ENCODE measurements at regions of chr3 and their contacts with region 1.

Region 1: DNA sequence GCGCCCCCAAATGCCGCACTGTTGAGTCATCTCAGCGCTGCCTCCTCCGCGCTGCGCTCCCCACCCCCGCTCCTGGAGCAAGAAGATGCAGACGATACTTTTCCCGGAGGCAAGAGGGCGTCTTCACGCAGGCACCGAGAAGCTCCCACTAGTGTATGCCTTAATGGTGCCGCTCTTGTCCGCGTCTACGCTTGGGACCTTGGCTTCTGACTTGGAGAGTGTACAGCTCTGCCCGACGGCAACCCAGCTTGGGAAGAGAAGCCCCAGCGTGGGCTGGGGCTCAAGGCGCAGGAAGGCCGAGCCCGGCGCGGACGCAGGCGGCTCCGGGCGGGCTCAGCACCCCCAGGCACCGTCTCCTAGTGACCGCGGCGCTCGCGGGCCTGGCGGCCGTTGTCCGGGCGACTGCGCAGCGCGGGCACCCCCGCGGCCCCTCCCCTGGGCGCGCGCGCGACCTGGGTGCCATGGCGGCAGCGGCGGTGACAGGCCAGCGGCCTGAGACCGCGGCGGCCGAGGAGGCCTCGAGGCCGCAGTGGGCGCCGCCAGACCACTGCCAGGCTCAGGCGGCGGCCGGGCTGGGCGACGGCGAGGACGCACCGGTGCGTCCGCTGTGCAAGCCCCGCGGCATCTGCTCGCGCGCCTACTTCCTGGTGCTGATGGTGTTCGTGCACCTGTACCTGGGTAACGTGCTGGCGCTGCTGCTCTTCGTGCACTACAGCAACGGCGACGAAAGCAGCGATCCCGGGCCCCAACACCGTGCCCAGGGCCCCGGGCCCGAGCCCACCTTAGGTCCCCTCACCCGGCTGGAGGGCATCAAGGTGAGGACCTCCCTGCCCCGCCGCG is at the start of gene P4HTM:
- DNase-seq: peak; percentile 92 to 95 (median 93)
- H3K4me3 ChIP-seq: peak within 1 kb of the TSS; percentile 68
- H3K27ac ChIP-seq: peak within 1 kb of the TSS; percentile 95 to 96
- H3K4me1 ChIP-seq: peaks cover 3% of the 10 kb centered on the region
- H3K27me3 ChIP-seq: no peaks in the 10 kb centered on the region
- CTCF ChIP-seq: peak; percentile 16 to 73 (median 63)
- EP300 ChIP-seq: no peak
- POLR2A ChIP-seq: peak; percentile 74
- total RNA-seq, gene P4HTM: 31.5 to 125 (median 46.5) TPM

Region 2: DNA sequence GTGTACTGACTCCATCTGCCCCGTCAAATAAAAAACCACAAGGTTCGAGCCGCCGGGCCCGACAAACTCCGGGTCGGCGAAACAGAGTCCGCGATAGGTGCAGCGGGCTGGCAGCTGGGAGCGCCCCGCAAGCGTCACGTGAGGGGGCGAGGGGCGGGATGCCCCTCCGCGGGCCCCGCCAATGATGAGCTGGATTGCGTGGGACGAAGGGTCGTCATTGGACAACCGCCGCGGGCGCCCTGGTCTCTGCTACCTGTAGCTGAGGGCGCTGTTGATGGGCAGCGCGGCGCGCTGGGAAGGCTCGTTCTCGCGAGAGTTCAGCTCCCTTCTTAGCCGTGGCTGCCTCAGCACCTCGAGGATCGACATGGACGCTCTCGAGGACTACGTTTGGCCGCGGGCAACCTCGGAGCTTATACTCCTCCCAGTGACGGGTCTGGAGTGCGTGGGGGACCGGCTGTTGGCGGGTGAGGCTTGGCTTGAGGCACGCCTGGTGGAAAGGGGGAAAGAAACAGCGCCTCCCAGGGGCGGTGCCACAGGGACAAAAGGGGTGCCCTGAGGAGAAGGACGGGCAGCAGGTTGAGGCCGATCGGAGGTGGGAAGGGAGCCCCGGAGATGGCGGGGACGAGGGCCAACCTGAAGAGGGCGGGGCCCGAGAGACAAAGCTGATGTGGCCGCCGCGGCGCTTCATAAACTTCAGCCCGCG is 17.2 kb after region 1 on chr3 and contains the start of gene WDR6:
- intact Hi-C with region 1: loop called in 1 of 4 experiments (anchors 2 kb)
- DNase-seq: peak; percentile 98 to 99 (median 98)
- H3K4me3 ChIP-seq: peak within 1 kb of the TSS; percentile 69
- H3K27ac ChIP-seq: peak within 1 kb of the TSS; percentile 91 to 97
- H3K4me1 ChIP-seq: peaks cover 6% of the 10 kb centered on the region
- H3K27me3 ChIP-seq: no peaks in the 10 kb centered on the region
- CTCF ChIP-seq: peak; percentile 10 to 71 (median 52)
- EP300 ChIP-seq: peak; percentile 54
- POLR2A ChIP-seq: peak; percentile 62
- total RNA-seq, gene WDR6: 116 to 289 (median 230) TPM

Region 3: DNA sequence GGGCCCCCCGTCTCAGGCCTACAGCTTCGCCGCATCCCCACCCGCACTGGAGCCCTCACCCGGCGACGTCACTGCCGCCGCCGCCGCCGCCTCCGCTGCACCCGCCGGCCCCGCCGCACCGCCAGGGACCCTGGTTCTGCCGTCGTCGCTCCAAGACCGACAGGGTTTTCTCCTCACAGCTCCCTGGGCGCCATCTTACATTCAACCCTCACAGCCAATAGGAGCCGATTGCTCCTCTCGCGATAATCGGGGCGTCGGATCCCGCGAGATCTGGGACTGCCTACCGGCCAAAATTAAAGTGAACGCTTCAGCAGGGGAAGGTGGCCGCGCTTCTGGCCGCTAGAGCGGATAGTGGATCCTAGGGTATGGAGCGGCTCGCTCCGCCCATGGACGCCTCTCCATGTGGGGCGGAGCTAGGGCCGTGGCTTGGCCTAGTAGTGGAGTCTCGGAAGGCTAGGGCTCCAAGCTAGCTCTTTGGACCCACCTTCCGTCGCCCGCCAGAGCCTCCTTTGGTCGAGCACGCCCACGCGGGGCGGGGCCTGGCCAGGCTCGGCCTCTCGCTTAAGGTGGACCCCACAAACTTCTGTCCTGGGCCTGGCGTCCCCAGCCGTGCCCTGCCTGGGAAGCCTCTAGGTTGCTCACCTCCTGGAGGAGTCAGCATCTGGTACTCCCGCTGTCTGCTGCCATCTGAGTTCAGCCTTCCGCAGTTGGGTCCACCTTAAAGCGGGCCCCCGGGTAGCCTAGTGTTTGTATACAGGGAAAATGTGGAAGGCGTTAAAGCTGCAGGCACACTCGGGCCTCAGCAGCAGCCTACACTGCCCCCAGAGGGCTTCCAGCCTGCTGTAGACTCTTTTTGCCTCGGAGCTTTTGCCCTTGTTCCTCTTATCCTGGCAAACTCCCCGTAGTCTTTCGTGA is 104.1 kb after region 1 on chr3 and contains the start of gene QRICH1:
- intact Hi-C with region 1: loop called in 1 of 4 experiments (anchors 10 kb)
- DNase-seq: peak; percentile 97 to 98 (median 98)
- H3K4me3 ChIP-seq: peak within 1 kb of the TSS; percentile 99
- H3K27ac ChIP-seq: peak within 1 kb of the TSS; percentile 86 to 88
- H3K4me1 ChIP-seq: peaks cover 10% of the 10 kb centered on the region
- H3K27me3 ChIP-seq: no peaks in the 10 kb centered on the region
- CTCF ChIP-seq: peak in 2 of 3 donors; percentile 43 to 58
- EP300 ChIP-seq: no peak
- POLR2A ChIP-seq: peak; percentile 72
- total RNA-seq, gene QRICH1: 56.9 to 104 (median 90.4) TPM